Esophagus muscularis mucosa (tissue), 4 donors: ENCODE measurements at regions of chr1 and their contacts with region 1.

Region 1: GRCh38 chr1:154669464-154670282 is 61.7 kb upstream of the ADAR start:
- DNase-seq: no peak
- H3K4me3 ChIP-seq: no peak overlapping the region
- H3K27ac ChIP-seq: no peak overlapping the region
- H3K4me1 ChIP-seq: peaks cover 0 to 3% (median 0%) of the 10 kb centered on the region in 4 donors
- H3K27me3 ChIP-seq: no peaks in the 10 kb centered on the region
- CTCF ChIP-seq: peak; percentile 78 to 83 (median 80)
- EP300 ChIP-seq: no peak
- POLR2A ChIP-seq: no peak

Region 2: GRCh38 chr1:154493276-154493675 is 176.4 kb before region 1 on chr1:
- intact Hi-C with region 1: loop called (anchors 10 kb)
- DNase-seq: no peak
- H3K4me3 ChIP-seq: no peak overlapping the region
- H3K27ac ChIP-seq: peak overlapping the region; percentile 17 to 52 (median 35)
- H3K4me1 ChIP-seq: peaks cover 11 to 37% (median 19%) of the 10 kb centered on the region in 4 donors
- H3K27me3 ChIP-seq: peaks cover 0 to 11% (median 0%) of the 10 kb centered on the region in 4 donors
- CTCF ChIP-seq: no peak
- EP300 ChIP-seq: no peak
- POLR2A ChIP-seq: no peak

Region 3: DNA sequence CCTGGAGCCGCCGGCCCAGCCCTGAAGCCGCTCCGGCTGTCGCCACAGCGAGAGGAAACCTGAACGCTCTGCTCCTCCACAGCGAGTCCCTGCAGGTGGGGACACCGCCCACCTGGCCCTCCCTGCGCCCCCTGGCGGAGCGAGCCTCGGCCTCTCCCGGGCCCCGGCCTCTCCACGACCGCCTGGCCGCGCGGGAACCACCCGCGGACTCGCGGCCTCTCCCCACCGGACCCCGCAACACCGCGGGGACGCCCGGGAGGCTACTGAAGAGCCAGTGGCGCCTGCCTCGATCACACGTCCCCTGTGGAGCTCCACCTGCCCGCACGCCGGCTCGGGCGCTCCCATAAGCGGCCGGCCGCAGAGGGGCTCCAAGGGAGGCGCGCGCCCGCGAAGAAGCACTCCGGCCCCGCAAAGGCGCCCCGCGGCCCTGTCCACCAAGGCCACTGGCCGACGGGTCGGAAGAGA is 90.8 kb after region 1 on chr1:
- intact Hi-C with region 1: loop called (anchors 2 kb)
- DNase-seq: no peak
- H3K4me3 ChIP-seq: peak overlapping the region; percentile 39 to 52 (median 49)
- H3K27ac ChIP-seq: peak overlapping the region in 1 of 4 donors; percentile 2
- H3K4me1 ChIP-seq: peaks cover 3 to 10% (median 9%) of the 10 kb centered on the region in 4 donors
- H3K27me3 ChIP-seq: peaks cover 0 to 9% (median 0%) of the 10 kb centered on the region in 4 donors
- CTCF ChIP-seq: peak; percentile 71 to 88 (median 79)
- EP300 ChIP-seq: no peak
- POLR2A ChIP-seq: no peak

Region 4: DNA sequence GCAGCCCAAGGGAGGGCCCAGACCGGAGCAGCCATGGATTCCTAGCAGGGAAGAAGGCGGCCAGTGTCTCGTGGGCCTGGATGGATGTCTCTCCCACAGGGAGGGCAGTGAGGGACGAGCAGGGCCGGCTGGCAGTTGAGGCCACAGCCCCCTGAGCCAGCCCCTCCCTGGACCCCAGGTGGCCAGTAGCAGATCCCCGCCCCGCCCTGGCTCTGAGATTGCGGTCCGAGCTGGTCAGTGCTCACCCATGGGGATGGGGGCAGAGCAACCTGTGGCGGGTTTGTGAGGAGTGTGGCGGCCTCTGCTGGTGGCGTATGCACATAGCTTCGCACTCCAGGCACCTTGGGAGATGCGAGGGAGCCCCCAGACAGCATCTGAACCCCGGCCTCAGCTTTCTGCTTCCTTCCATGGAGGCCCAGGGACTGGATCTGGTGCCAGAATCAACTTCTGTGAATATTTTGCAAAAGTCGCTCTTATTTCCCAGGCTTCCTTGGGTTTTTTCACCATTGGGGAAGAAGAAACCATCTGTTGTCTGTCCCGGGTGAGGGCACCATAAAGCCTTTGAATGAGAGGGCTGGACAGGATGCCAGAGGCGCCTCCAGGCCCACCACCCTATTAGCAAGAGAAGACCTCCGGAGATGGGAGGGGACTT is 208.8 kb after region 1 on chr1:
- intact Hi-C with region 1: loop called (anchors 2 kb)
- DNase-seq: no peak
- H3K4me3 ChIP-seq: no peak overlapping the region
- H3K27ac ChIP-seq: no peak overlapping the region
- H3K4me1 ChIP-seq: peaks cover 0 to 9% (median 5%) of the 10 kb centered on the region in 4 donors
- H3K27me3 ChIP-seq: peaks cover 0 to 7% (median 0%) of the 10 kb centered on the region in 4 donors
- CTCF ChIP-seq: peak; percentile 86 to 91 (median 91)
- EP300 ChIP-seq: no peak
- POLR2A ChIP-seq: no peak